ENCODE measurements at regions of chr19 and their contacts with region 1.

Region 1: GRCh38 chr19:37906869-37907734 is at the start of gene SIPA1L3:
- H3K4me3 ChIP-seq: peak within 1 kb of the TSS; percentile 68
- H3K27ac ChIP-seq: peak within 1 kb of the TSS; percentile 81
- H3K4me1 ChIP-seq: peaks cover 27% of the 10 kb centered on the region
- CTCF ChIP-seq: peak; percentile 79; the same call in 1 of the 2 replicates

Region 2: GRCh38 chr19:37370880-37371661 is 536.0 kb before region 1 on chr19 and contains the start of gene ZNF527:
- CTCF ChIA-PET with region 1: interaction called, 3 read pairs
- POLR2A ChIA-PET with region 1: interaction called, 16 read pairs
- H3K4me3 ChIP-seq: peak within 1 kb of the TSS; percentile 48
- H3K27ac ChIP-seq: peak within 1 kb of the TSS; percentile 52
- H3K4me1 ChIP-seq: no peaks in the 10 kb centered on the region
- CTCF ChIP-seq: peak; percentile 91

Region 3: DNA sequence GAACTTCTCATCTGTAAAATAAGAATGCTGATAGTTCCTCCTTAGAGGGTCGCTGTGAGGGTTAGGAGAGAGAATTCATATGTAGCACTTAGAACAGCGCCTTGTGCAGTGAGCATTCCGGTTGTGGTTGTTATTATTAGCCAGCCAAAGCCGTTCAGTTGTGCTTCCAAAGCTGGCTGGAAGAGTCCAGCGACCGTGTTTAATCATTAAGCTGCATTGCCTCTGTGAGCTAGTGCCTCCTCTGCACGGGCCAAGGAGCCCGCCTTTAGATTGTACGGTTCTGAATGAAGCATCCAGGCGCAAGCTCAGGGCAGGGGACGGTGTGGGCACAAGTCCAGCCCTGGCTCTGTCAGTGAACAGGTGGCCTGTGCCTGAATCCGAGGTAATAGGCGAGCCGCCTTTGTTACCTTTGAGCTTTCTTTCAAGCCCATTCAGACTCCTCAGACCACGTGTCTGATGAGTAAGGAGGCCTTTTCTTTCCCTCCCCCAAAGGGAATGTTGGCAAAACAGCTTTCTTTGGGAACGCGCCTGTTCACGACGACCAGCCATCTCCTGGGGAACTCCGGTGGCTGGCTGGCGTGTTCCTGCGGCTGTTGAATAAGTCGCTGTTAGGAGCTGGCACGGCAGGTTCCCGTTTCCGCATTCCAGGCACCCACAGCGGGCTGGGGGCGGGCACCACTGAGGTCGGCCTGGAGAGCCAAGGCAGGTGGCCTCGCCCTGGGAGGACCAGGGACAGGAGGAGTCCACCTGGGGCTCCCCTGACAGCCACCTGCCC is 25.0 kb after region 1 on chr19:
- CTCF ChIA-PET with region 1: interaction called, 35 read pairs
- POLR2A ChIA-PET with region 1: interaction called, 31 read pairs
- H3K4me3 ChIP-seq: peak overlapping the region; percentile 1
- H3K27ac ChIP-seq: no peak overlapping the region
- H3K4me1 ChIP-seq: peaks cover 25% of the 10 kb centered on the region
- CTCF ChIP-seq: no peak

Region 4: GRCh38 chr19:38035515-38036495 is 128.7 kb after region 1 on chr19:
- CTCF ChIA-PET with region 1: interaction called, 10 read pairs
- POLR2A ChIA-PET with region 1: no interaction called
- H3K4me3 ChIP-seq: no peak overlapping the region
- H3K27ac ChIP-seq: no peak overlapping the region
- H3K4me1 ChIP-seq: 0 out of 2 replicates have a peak, but pooled peaks cover 2% of the 10 kb centered on the region
- CTCF ChIP-seq: no peak

Region 5: GRCh38 chr19:38134540-38135149 is 227.5 kb after region 1 on chr19:
- CTCF ChIA-PET with region 1: interaction called, 28 read pairs
- POLR2A ChIA-PET with region 1: interaction called, 4 read pairs
- H3K4me3 ChIP-seq: no peak overlapping the region
- H3K27ac ChIP-seq: no peak overlapping the region
- H3K4me1 ChIP-seq: no peaks in the 10 kb centered on the region
- CTCF ChIP-seq: peak; percentile 96

Region 6: GRCh38 chr19:38224014-38224862 is 317.1 kb after region 1 on chr19 and contains the start of gene DPF1:
- CTCF ChIA-PET with region 1: interaction called, 316 read pairs
- POLR2A ChIA-PET with region 1: interaction called, 14 read pairs
- H3K4me3 ChIP-seq: peak within 1 kb of the TSS; percentile 62
- H3K27ac ChIP-seq: peak within 1 kb of the TSS; percentile 50; the same call in 1 of the 2 replicates
- H3K4me1 ChIP-seq: peaks cover 16% of the 10 kb centered on the region
- CTCF ChIP-seq: peak; percentile 90

Region 7: DNA sequence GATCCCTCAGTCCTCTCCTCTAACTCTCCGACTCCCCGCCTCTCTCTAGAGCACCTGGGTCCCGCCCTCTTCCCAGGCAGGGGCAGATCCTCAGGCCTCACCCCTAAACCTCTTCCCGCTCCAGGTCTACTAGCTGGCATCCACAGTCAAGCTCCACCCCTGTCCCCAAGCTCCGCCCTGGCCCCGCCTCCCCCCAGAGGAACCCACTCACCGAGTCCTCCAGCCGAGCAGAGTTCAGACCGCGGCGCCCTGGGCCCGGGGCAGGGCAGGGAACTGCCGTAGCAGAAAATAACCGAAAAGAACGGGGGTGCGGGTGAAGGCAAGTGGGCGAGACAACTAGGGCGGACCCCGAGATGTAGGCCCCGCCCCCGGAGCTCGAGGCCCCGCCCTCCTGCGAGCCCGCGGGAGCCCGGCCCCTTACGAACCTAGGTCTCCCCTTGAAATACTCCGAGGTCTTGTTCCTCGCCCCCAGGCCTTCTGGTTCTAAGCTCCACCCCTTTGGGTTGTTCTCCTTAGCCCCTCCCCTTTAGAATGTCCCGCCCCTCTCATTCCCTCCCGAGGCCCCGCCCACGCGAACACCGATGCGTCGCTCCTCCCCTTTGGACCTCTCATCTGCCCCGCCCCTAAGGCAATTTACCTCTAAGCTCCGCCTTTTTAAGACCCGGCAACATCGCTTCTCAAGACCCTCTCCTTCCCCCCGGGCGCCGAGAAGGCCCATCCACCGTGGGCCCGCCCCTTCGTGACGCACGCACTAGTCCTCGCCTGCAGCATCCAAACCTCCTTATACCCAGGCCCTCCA is 480.6 kb after region 1 on chr19 and contains the start of gene GGN:
- CTCF ChIA-PET with region 1: interaction called, 5 read pairs
- POLR2A ChIA-PET with region 1: interaction called, 10 read pairs
- H3K4me3 ChIP-seq: peak within 1 kb of the TSS; percentile 56
- H3K27ac ChIP-seq: peak within 1 kb of the TSS; percentile 63
- H3K4me1 ChIP-seq: peaks cover 19% of the 10 kb centered on the region
- CTCF ChIP-seq: no peak